Activated CD4-positive, alpha-beta T cell treated with anti-CD3 and anti-CD28 coated beads, Interleukin-2, amount 10 ng/mL, durations not matched to agents 7 days and 5 days (primary cell): ENCODE measurements at regions of chr9 and their contacts with region 1.

Region 1: DNA sequence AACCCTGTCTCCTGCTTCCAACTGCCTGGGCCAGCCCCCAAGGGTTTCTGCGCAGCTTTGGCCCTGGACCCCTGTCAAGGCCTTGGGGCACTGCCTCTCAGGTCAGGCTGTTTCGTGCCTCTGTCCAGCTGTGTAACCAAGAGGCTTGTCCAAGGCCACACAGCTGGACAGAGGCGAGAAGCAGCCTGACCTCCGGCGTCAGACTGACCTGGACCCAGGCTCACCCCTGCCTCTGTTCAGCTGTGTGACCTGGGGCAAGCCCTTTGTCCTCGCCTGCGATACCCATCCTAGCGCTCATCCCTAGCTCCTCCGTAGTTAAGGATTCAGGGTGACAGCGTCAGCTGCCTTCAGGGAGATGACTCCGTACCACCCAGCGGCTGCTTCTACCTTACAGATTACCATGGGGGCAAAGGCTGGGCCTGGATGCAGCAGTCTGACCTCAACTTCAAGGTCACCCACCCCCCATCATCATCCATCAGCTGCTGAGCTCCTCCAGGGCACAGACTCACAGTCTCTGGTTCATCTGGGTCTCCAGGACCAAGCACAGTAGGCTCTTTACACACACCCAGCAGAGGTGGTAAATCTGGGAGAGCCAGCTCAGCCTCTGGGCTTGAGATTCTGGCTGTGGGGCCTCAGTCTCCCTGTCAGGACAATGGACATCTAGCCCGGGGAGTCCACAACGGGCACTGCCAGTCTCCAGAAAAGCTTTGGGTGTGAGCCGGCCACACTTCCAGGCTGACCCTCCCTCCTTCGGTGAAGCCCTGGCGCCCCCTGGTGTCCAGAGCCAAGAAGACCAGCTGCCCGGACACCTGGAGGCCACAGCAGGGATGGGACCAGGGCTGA is 7.9 kb downstream of the AK1 start:
- DNase-seq: peak; percentile 84
- H3K4me3 Mint-ChIP-seq: no peak overlapping the region
- H3K27ac Mint-ChIP-seq: no peak overlapping the region
- H3K4me1 Mint-ChIP-seq: peaks cover 17% of the 10 kb centered on the region
- H3K27me3 Mint-ChIP-seq: no peaks in the 10 kb centered on the region

Region 2: DNA sequence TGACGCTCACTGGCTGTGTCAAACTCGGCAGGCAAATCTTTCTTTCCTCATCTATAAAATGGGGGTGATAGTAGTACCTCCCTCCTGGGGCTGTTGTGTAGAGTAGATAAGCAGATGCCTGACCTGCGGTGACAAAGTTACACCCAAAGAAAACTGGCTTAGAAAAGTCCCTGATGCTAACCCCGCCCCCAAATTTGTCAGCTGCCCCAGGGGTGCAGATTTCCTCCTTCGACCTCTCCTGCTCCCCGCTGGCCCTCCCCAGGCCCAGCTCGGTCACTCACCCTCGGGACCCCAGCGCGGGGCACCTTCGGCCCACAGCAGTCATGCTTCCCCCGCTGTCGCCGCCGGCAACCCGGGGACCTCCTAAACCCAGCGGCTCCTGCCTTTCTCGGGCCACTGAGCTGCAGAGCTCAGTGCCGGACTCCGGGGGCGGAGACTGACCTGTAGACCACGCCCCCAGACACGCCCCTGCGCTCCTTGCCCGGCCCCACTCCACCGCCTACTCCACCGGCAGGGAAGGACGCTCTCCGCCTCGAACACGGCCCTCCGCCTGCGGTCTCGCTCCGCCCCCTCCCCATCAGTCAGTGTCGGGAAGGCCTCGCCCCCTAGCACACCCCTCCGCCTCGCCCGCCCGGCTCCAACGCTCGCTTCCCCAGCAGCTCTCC is 98.5 kb before region 1 on chr9:
- CTCF ChIA-PET with region 1: interaction called, 10 read pairs
- POLR2A ChIA-PET with region 1: no interaction called
- DNase-seq: peak; percentile 96
- H3K4me3 Mint-ChIP-seq: peak overlapping the region; percentile 81
- H3K27ac Mint-ChIP-seq: peak overlapping the region; percentile 84
- H3K4me1 Mint-ChIP-seq: peaks cover 82% of the 10 kb centered on the region
- H3K27me3 Mint-ChIP-seq: no peaks in the 10 kb centered on the region

Region 3: DNA sequence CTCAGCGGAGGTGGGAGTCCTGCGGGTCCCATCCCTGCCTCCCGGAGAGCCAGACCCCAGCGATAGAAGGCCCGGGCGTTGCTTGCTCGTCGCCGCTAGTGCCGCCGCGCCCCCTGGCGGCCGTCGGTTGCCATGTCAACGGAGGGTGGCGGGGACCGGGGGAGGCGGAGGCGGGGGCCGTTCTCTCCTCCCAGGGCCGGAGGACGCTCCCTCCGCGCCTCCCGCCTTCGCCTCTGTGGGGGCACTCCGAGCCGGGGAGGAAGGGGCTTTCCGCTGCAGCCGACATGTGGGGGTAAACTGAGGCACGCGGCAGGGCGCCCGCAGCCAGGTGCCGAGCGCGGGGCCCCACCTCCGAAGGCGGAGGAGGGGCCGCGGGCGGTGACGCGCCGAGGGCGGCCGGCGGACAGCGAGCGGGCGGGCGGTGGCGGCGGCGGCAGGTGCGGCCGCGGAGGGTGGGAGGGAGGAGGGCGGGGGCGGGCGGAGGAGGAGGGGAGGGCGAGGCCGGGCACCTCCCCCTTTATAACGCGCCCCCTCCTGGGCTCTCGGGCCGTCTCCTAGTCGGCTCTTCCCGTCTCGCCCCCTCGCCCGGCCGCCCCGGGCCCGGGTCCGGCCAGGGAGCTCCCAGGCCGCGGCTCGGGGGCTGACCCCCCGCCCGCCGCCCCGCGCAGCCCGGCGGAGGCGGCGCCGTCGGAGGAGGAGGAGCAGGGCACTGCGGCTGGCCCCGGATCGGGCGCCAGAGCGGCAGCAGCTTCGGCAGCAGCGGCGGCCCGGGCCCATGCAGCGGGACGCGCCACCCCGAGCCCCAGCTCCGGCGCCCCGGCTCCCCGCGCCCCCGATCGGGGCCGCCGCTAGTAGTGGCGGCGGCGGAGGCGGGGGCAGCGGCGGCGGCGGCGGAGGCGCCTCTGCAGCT is 84.3 kb before region 1 on chr9:
- CTCF ChIA-PET with region 1: interaction called, 10 read pairs
- POLR2A ChIA-PET with region 1: no interaction called
- DNase-seq: peak; percentile 90
- H3K4me3 Mint-ChIP-seq: peak overlapping the region; percentile 96
- H3K27ac Mint-ChIP-seq: peak overlapping the region; percentile 96
- H3K4me1 Mint-ChIP-seq: peaks cover 72% of the 10 kb centered on the region
- H3K27me3 Mint-ChIP-seq: no peaks in the 10 kb centered on the region

Region 4: DNA sequence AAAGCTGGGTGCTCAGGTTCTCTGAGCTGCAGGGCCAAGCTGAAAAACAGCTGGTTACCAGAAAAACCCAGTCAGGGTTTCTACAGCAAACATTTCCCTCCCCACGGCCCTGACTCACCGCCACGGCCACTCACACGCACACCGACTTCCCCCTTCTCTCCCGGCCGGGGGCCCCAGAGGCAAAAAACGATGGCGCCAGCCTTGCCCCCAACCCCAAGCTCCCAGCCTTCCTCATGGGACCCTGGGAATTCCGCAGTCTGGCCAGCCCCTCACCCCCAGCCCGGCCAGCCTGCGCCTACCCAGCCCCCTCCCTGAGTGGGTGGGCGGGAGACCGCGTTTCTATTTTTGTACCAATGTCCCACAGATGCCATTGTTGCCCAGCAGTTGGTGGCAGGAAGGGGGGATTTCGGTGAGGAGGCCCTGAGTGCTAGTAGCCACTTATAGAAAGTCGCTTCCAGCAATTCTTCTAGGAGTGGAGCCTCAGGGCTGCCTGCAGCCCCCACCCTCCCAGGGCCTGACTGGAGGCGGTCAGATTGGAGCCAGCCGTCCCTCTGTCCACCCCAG is 33.5 kb before region 1 on chr9:
- CTCF ChIA-PET with region 1: interaction called, 11 read pairs
- POLR2A ChIA-PET with region 1: no interaction called
- DNase-seq: no peak
- H3K4me3 Mint-ChIP-seq: no peak overlapping the region
- H3K27ac Mint-ChIP-seq: no peak overlapping the region
- H3K4me1 Mint-ChIP-seq: peaks cover 12% of the 10 kb centered on the region
- H3K27me3 Mint-ChIP-seq: no peaks in the 10 kb centered on the region

Region 5: GRCh38 chr9:127854184-127854806 is 15.2 kb before region 1 on chr9 and contains the start of gene ENG:
- CTCF ChIA-PET with region 1: interaction called, 17 read pairs
- POLR2A ChIA-PET with region 1: interaction called, 3 read pairs
- DNase-seq: peak; percentile 22
- H3K4me3 Mint-ChIP-seq: peak within 1 kb of the TSS; percentile 86
- H3K27ac Mint-ChIP-seq: peak within 1 kb of the TSS; percentile 93
- H3K4me1 Mint-ChIP-seq: peaks cover 42% of the 10 kb centered on the region
- H3K27me3 Mint-ChIP-seq: peaks cover 2% of the 10 kb centered on the region
- total RNA-seq, gene ENG: 17.2 to 17.3 TPM

Region 6: GRCh38 chr9:127884427-127884911 is 14.9 kb after region 1 on chr9:
- CTCF ChIA-PET with region 1: interaction called, 19 read pairs
- POLR2A ChIA-PET with region 1: no interaction called
- DNase-seq: no peak
- H3K4me3 Mint-ChIP-seq: no peak overlapping the region
- H3K27ac Mint-ChIP-seq: no peak overlapping the region
- H3K4me1 Mint-ChIP-seq: peaks cover 5% of the 10 kb centered on the region
- H3K27me3 Mint-ChIP-seq: no peaks in the 10 kb centered on the region

Region 7: DNA sequence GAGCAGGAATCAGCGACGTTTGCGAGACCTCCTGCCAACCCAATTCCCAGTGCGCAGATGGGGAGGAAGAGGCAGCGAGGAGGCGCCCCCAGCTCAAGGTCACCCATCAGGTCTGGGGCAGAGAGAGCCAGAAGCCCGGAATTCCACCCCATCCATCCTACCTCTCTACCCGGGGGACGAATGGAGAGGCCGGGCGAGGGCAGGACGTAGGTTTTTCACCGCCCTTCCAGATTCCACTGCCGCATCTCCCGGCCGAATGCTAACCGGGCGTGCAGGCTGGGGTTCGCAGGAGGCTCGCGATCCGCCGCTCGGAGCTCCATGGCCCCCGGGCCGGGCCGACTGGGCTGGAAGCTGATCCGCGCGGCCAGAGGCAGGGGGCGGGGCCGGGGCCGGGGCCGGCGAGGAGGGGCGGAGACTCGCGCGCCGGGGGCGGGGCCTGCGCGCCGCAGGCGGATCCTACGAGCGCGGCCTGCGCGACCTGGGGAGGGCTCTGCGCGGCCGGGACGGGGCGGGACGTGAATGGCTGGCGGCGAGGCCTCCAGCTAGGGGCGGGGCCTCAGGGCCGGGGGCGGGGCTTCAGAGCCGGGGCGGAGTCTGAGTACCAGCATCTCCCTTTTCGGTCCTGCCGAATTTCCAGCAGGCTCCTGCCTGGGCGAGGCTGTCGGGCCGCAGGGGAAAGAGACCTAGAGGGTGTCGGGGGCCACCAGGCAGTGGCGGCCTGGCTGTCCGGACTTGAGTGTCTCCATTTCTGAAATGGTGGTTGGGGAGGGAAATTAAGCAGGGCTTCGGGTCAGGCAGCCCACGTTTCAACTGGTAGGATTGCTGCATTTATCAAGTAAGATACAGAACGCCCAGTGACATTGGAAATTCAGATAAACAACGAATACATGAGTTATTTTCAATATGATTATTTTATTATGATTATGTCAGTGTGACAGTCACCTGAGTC is 47.4 kb after region 1 on chr9 and contains the start of gene ST6GALNAC4:
- CTCF ChIA-PET with region 1: interaction called, 19 read pairs
- POLR2A ChIA-PET with region 1: no interaction called
- DNase-seq: peak; percentile 94
- H3K4me3 Mint-ChIP-seq: peak within 1 kb of the TSS; percentile 78
- H3K27ac Mint-ChIP-seq: peak within 1 kb of the TSS; percentile 87
- H3K4me1 Mint-ChIP-seq: peaks cover 62% of the 10 kb centered on the region
- H3K27me3 Mint-ChIP-seq: peaks cover under 1% of the 10 kb centered on the region
- total RNA-seq, gene ST6GALNAC4: 16.8 to 22.4 TPM